Panc1 (cell line): ENCODE measurements at regions of chr1 and their contacts with region 1.

Region 1: GRCh38 chr1:88557014-88557413 is 127.1 kb upstream of the PKN2 start:
- DNase-seq: no peak
- ATAC-seq: no peak
- H3K4me3 ChIP-seq: no peak overlapping the region
- H3K27ac ChIP-seq: no peak overlapping the region
- H3K4me1 ChIP-seq: no peaks in the 10 kb centered on the region
- H3K27me3 ChIP-seq: peaks cover 2% of the 10 kb centered on the region; the same call in 1 of the 2 replicates
- CTCF ChIP-seq: no peak

Region 2: DNA sequence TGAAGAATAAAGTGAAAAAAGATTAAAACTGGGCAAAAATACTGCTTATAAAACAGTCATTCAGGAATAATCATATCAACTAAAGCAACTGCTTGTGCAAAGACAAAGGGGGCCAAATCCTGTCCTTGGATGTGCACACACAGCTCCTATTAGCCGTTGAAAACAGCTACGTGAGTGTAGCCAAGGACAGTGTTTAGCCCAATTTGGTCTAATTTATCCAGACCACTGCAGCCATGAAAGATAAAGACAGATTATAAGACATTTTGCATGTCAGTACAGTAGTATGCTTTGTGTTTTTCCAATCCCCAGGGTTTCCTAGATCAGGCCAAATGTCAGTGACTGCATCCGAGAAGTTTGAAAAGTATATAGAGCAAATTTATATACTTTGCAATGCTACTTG is 19.2 kb before region 1 on chr1:
- CTCF ChIA-PET with region 1: no interaction called
- POLR2A ChIA-PET with region 1: no interaction called
- in situ Hi-C with region 1: no loop called
- intact Hi-C with region 1: loop called (anchors 2 kb)
- DNase-seq: no peak
- ATAC-seq: no peak
- H3K4me3 ChIP-seq: no peak overlapping the region
- H3K27ac ChIP-seq: no peak overlapping the region
- H3K4me1 ChIP-seq: no peaks in the 10 kb centered on the region
- H3K27me3 ChIP-seq: peaks cover 7% of the 10 kb centered on the region; the same call in 1 of the 2 replicates
- CTCF ChIP-seq: no peak

Region 3: GRCh38 chr1:88608139-88608943 is 51.3 kb after region 1 on chr1:
- CTCF ChIA-PET with region 1: no interaction called
- POLR2A ChIA-PET with region 1: no interaction called
- in situ Hi-C with region 1: no loop called
- intact Hi-C with region 1: no loop called
- DNase-seq: peak; percentile 39
- ATAC-seq: peak; percentile 82
- H3K4me3 ChIP-seq: no peak overlapping the region
- H3K27ac ChIP-seq: no peak overlapping the region
- H3K4me1 ChIP-seq: 0 out of 2 replicates have a peak, but pooled peaks cover 3% of the 10 kb centered on the region
- H3K27me3 ChIP-seq: peaks cover 3% of the 10 kb centered on the region; the same call in 1 of the 2 replicates
- CTCF ChIP-seq: peak; percentile 83

Region 4: DNA sequence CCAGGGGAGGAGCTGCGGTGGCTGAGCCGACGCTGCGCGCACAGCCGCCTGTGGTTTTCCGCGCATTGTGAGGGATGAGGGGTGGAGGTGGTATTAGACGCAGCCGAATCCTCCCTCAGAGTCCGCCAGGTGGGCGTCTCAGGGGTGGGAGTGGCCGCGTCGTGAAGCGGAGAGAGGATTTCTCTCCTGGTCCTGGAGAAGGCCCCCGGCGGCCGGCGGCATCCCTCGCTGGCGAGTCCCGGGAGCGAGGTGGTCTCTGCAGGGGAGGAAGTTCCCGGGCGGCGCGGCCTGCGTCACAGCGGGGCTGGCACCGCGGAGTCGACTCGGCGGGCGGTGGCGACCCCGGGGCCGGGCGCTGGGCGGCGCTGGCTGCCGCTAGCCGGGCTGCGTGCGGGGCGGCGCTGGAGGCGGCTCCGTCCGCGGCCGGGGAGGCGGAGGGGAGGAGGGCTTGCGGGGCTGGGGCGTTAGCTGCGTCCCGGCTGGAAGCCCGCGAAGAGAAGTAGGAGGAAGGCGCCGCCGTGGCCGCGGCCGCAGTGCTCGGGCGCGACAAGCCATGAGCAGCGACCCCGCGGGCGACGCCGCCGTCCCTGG is 1075.7 kb after region 1 on chr1 and contains the start of gene LRRC8C:
- CTCF ChIA-PET with region 1: no interaction called
- POLR2A ChIA-PET with region 1: no interaction called
- in situ Hi-C with region 1: no loop called
- intact Hi-C with region 1: no loop called
- DNase-seq: no peak
- ATAC-seq: peak; percentile 94
- H3K4me3 ChIP-seq: peak within 1 kb of the TSS; percentile 79 to 87
- H3K27ac ChIP-seq: peak within 1 kb of the TSS; percentile 91
- H3K4me1 ChIP-seq: peaks cover 36% of the 10 kb centered on the region
- H3K27me3 ChIP-seq: no peaks in the 10 kb centered on the region
- CTCF ChIP-seq: peak; percentile 98
- total RNA-seq, gene LRRC8C: 17.1 TPM